GM12878 (cell line): ENCODE measurements at regions of chr12 and their contacts with region 1.

Region 1: GRCh38 chr12:75526655-75527511 is 15.5 kb upstream of the KRR1 start:
- DNase-seq: peak; percentile 54
- ATAC-seq: peak; percentile 98
- H3K4me3 ChIP-seq: no peak overlapping the region
- H3K27ac ChIP-seq: no peak overlapping the region
- H3K4me1 ChIP-seq: no peaks in the 10 kb centered on the region; the same call in 1 of the 2 replicates
- H3K27me3 ChIP-seq: no peaks in the 10 kb centered on the region
- CTCF ChIP-seq: peak; percentile 53 to 73 (median 62); a peak in 5 of 6 replicates
- EP300 ChIP-seq: peak; percentile 36 to 58; a peak in 1 of 4 replicates
- POLR2A ChIP-seq: no peak
- RAD21 ChIP-seq: peak; percentile 82

Region 2: DNA sequence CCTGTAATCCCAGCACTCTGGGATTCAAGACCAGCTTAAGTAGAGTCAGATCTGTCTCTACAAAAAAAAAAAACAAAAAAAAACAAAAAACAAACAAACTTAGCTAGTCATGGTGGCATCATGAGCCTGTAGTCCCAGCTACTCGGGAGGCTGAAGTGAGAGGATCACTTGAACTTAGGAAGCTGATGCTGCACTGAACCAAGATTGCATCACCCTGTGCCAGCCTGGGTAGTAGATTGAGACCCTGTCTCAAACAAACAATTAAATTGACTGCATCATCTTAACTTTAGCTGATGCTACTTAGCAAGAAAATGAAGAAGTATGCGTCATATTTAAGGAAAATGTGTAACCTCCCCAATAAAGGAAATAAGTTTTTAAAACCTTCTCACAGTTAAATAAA is 1125.8 kb before region 1 on chr12:
- CTCF ChIA-PET with region 1: no interaction called
- POLR2A ChIA-PET with region 1: no interaction called
- RAD21 ChIA-PET with region 1: no interaction called
- SMC1A ChIA-PET with region 1: no interaction called
- in situ Hi-C with region 1: no loop called
- intact Hi-C with region 1: no loop called
- DNase-seq: no peak
- ATAC-seq: no peak
- H3K4me3 ChIP-seq: no peak overlapping the region
- H3K27ac ChIP-seq: no peak overlapping the region
- H3K4me1 ChIP-seq: no peaks in the 10 kb centered on the region
- H3K27me3 ChIP-seq: no peaks in the 10 kb centered on the region
- CTCF ChIP-seq: no peak
- EP300 ChIP-seq: no peak
- POLR2A ChIP-seq: no peak
- RAD21 ChIP-seq: no peak

Region 3: DNA sequence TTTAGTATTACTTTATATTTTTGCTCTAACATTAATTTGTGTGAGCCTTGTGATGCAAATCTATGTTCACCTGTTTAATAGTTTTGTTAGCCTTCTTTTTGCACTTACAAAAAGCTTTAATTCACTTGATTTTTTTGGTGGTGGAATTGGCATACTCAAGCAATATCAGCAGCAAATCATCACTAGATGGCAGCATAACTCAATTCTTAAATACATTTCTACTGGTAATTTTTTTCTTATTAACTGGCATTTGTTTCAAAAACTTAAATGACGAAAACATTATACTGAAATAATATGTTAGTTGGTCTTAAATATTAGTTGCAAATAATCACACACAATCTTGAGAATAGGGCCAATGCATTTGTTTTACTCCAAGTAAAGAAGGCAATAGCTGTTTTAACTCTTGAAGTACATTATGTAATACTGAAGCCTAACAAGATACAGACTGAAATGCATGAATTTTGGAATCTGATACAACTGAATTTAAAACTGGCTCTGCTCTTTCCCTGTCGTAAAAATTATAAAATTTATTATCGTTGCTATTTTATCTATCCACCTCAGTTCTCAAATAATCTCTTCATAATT is 837.7 kb before region 1 on chr12:
- CTCF ChIA-PET with region 1: no interaction called
- POLR2A ChIA-PET with region 1: no interaction called
- RAD21 ChIA-PET with region 1: no interaction called
- SMC1A ChIA-PET with region 1: no interaction called
- in situ Hi-C with region 1: no loop called
- intact Hi-C with region 1: no loop called
- DNase-seq: no peak
- ATAC-seq: peak; percentile 65; the same call in 2 of the 3 replicates
- H3K4me3 ChIP-seq: no peak overlapping the region
- H3K27ac ChIP-seq: no peak overlapping the region
- H3K4me1 ChIP-seq: no peaks in the 10 kb centered on the region
- H3K27me3 ChIP-seq: no peaks in the 10 kb centered on the region
- CTCF ChIP-seq: peak in 2 of 3 experiments; percentile 52 to 55; a peak in 3 of 6 replicates
- EP300 ChIP-seq: no peak
- POLR2A ChIP-seq: no peak
- RAD21 ChIP-seq: peak; percentile 52

Region 4: DNA sequence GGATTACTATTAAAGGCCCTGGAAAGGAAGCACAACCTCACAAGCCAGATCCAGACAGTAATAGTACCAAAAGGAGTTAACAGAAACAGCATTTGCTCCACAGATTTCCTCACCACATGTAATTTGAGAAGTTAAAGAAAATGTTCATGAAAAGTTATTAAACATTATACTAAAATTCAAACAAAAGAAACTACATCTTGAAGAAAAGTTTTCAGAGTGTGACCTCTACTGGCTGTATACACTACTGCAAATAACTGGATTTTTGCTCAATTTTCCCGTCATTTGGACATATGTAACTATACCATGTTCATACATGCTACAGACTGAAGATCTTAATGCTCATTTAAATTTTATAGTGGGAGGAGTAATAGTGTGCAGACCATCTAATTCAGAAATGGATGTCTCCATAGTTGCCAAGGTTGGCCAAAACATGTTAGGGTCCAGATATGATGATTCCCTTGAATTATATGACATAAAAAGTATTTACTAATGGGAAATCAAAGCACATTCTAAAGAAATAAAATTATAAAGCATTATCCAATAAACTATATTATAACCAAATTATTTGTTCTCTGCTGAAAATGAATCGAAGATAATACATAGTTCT is 21.1 kb before region 1 on chr12:
- CTCF ChIA-PET with region 1: interaction called, 12 read pairs
- POLR2A ChIA-PET with region 1: no interaction called
- RAD21 ChIA-PET with region 1: interaction called, 13 read pairs
- SMC1A ChIA-PET with region 1: interaction called, 19 read pairs
- in situ Hi-C with region 1: no loop called
- intact Hi-C with region 1: no loop called
- DNase-seq: no peak
- ATAC-seq: peak; percentile 50
- H3K4me3 ChIP-seq: no peak overlapping the region
- H3K27ac ChIP-seq: no peak overlapping the region
- H3K4me1 ChIP-seq: no peaks in the 10 kb centered on the region; the same call in 1 of the 2 replicates
- H3K27me3 ChIP-seq: no peaks in the 10 kb centered on the region
- CTCF ChIP-seq: peak; percentile 55 to 69 (median 63); a peak in 5 of 6 replicates
- EP300 ChIP-seq: no peak
- POLR2A ChIP-seq: no peak
- RAD21 ChIP-seq: peak; percentile 56

Region 5: GRCh38 chr12:75553398-75553797 is 26.5 kb after region 1 on chr12:
- CTCF ChIA-PET with region 1: interaction called, 18 read pairs
- POLR2A ChIA-PET with region 1: no interaction called
- RAD21 ChIA-PET with region 1: interaction called, 28 read pairs
- SMC1A ChIA-PET with region 1: interaction called, 16 read pairs
- in situ Hi-C with region 1: no loop called
- intact Hi-C with region 1: no loop called
- DNase-seq: no peak
- ATAC-seq: peak; percentile 44
- H3K4me3 ChIP-seq: no peak overlapping the region
- H3K27ac ChIP-seq: no peak overlapping the region
- H3K4me1 ChIP-seq: no peaks in the 10 kb centered on the region
- H3K27me3 ChIP-seq: no peaks in the 10 kb centered on the region
- CTCF ChIP-seq: no peak
- EP300 ChIP-seq: no peak
- POLR2A ChIP-seq: no peak
- RAD21 ChIP-seq: no peak

Region 6: GRCh38 chr12:75738486-75738885 is 211.6 kb after region 1 on chr12:
- CTCF ChIA-PET with region 1: no interaction called
- POLR2A ChIA-PET with region 1: no interaction called
- RAD21 ChIA-PET with region 1: interaction called, 10 read pairs
- SMC1A ChIA-PET with region 1: no interaction called
- in situ Hi-C with region 1: no loop called
- intact Hi-C with region 1: no loop called
- DNase-seq: peak; percentile 16
- ATAC-seq: peak; percentile 96
- H3K4me3 ChIP-seq: no peak overlapping the region
- H3K27ac ChIP-seq: no peak overlapping the region
- H3K4me1 ChIP-seq: no peaks in the 10 kb centered on the region
- H3K27me3 ChIP-seq: no peaks in the 10 kb centered on the region
- CTCF ChIP-seq: no peak
- EP300 ChIP-seq: 0 out of 4 replicates have a peak, but pooled peaks have one; percentile 13 to 36
- POLR2A ChIP-seq: no peak
- RAD21 ChIP-seq: no peak

Region 7: DNA sequence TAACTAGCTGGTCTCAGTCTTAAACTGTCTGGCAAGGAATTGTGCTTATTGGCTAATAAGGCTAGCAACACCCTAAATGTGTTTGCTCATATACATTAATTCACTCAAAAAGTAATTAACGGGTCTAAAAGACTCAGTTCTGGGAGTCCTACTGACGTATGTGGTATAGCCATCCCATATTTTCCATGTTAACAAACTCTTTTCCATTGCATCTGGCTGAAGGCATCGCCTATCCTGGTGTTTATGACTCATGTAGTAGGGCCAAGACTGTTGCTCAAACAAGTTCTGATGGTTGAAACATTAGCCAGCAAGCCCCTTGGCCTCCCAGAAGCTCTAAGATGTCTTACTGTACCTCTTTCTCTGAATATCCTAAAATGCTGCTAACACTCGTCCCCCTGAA is 406.2 kb after region 1 on chr12:
- CTCF ChIA-PET with region 1: interaction called, 5 read pairs
- POLR2A ChIA-PET with region 1: no interaction called
- RAD21 ChIA-PET with region 1: interaction called, 3 read pairs
- SMC1A ChIA-PET with region 1: interaction called, 4 read pairs
- in situ Hi-C with region 1: no loop called
- intact Hi-C with region 1: loop called (anchors 2 kb)
- DNase-seq: no peak
- ATAC-seq: no peak
- H3K4me3 ChIP-seq: no peak overlapping the region
- H3K27ac ChIP-seq: no peak overlapping the region
- H3K4me1 ChIP-seq: peaks cover 12% of the 10 kb centered on the region
- H3K27me3 ChIP-seq: no peaks in the 10 kb centered on the region
- CTCF ChIP-seq: no peak
- EP300 ChIP-seq: no peak
- POLR2A ChIP-seq: no peak
- RAD21 ChIP-seq: no peak

Region 8: DNA sequence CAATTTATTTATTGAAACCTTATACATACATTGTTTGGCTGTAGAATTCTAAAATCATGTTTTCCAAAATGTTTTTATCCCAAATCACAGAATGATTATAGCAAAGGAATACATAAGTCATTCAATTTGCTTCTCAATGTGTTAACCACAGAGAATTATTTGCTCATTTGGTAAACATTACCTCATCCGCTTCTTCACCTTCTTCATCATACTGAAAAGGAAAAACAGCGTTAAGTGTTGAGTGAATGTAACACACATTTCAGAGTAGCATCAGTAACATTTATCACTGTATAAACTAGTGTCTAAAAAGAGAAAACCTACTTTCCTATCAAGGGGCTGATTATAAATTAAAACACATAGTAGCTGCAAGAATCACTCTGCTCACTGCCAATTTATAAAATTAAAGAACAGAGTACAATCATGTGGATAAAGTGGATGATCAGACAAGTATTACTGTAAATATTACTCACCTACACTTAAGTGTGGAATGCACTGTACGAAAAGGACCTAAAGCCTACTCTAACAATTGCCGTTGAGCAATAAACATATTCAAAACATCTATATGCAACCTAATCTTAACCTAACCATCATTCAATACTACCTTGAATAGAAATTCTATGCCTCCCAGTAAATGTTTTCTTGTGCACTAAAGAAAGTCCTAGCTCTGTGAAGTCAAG is 522.8 kb after region 1 on chr12:
- CTCF ChIA-PET with region 1: interaction called, 13 read pairs
- POLR2A ChIA-PET with region 1: no interaction called
- RAD21 ChIA-PET with region 1: interaction called, 3 read pairs
- SMC1A ChIA-PET with region 1: interaction called, 8 read pairs
- in situ Hi-C with region 1: no loop called
- intact Hi-C with region 1: no loop called
- DNase-seq: no peak
- ATAC-seq: no peak
- H3K4me3 ChIP-seq: no peak overlapping the region
- H3K27ac ChIP-seq: no peak overlapping the region
- H3K4me1 ChIP-seq: no peaks in the 10 kb centered on the region
- H3K27me3 ChIP-seq: no peaks in the 10 kb centered on the region
- CTCF ChIP-seq: no peak
- EP300 ChIP-seq: no peak
- POLR2A ChIP-seq: no peak
- RAD21 ChIP-seq: no peak

Region 9: DNA sequence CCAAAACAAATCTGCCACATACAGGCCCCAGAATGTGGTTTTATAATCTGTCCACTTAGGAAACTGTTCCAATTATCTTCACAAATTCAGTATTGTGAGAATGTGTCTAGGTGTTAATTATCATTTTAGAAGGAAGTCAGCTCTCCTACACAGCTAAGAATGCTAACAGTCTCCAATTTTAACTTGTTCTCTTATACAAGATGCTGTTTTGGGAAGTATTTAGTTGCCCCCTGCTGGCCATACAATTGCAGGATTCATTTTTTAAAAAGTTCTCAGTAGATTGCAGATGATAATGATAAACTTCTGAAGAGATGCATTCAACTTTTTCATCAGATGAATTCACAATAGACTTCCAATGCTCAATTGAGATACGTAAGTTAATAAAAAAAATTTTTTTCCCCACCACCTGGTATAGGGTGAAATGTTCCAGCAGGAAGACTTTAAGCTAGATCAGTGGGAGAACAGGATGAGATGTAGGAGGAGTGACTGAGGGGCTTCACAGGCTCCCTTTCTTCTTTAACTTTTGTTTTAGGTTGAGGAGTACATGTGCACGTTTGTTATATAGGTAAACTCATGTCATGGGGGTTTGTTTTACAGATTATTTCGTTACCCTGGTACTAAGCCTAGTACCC is 1060.0 kb after region 1 on chr12:
- CTCF ChIA-PET with region 1: interaction called, 15 read pairs
- POLR2A ChIA-PET with region 1: no interaction called
- RAD21 ChIA-PET with region 1: interaction called, 6 read pairs
- SMC1A ChIA-PET with region 1: interaction called, 7 read pairs
- in situ Hi-C with region 1: no loop called
- intact Hi-C with region 1: loop called (anchors 10 kb)
- DNase-seq: no peak
- ATAC-seq: peak; percentile 82
- H3K4me3 ChIP-seq: no peak overlapping the region
- H3K27ac ChIP-seq: no peak overlapping the region
- H3K4me1 ChIP-seq: no peaks in the 10 kb centered on the region
- H3K27me3 ChIP-seq: no peaks in the 10 kb centered on the region
- CTCF ChIP-seq: peak; percentile 54 to 69 (median 68); a peak in 5 of 6 replicates
- EP300 ChIP-seq: no peak
- POLR2A ChIP-seq: no peak
- RAD21 ChIP-seq: peak; percentile 85